ENCODE measurements at regions of chr1 and their contacts with region 1.

Region 1: DNA sequence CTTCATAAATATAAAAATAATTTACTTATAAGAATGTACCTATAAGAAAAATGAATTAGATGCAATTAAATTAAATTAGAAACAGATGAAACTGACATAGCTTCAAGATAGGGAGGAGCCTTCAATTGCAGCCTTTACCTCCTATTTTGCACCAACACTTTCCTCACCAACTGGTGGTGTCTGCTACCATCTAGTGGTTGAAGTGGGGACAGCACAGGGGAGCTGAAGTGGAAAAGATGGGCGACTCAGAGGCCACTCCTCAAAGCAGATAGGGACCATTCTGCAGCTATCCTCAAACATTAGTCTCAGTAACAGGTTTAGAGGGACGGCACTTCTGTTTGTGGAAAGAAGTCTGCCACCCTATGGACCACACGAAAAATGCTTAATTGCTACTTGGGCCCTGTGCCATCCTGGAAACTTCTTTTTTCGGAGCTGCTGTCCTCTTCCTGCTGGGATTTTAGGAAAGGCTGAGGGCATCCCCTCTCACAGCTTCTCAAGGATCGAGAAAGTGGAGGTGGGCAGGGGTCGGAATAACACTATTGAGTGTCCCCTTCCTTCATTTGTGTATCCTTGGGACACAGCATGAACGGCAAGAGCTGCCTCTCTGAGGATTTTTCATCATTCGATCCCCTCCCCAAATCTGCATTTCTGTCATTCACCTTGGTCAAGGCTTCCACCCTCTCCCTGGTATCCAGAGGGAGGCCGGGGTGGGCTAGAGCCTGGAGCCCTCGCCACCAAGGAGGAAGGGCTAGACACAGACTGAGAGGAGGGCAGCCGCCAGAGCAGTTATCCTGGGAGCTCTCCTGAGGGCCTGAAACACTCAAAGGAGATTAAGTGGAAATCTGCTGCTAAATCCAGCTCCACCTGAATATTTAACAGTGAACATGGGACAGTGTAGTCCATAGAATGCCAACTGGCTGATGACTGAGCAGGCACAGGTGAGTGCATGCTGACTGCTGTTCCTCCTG is 9.6 kb downstream of the PROK1 start:
- DNase-seq: peak; percentile 96
- H3K4me3 Mint-ChIP-seq: no peak overlapping the region
- H3K27ac Mint-ChIP-seq: no peak overlapping the region
- H3K4me1 Mint-ChIP-seq: no peaks in the 10 kb centered on the region
- H3K27me3 Mint-ChIP-seq: no peaks in the 10 kb centered on the region

Region 2: GRCh38 chr1:110196917-110197765 is 263.4 kb before region 1 on chr1:
- intact Hi-C with region 1: loop called (anchors 1 kb)
- DNase-seq: peak; percentile 86
- H3K4me3 Mint-ChIP-seq: no peak overlapping the region
- H3K27ac Mint-ChIP-seq: no peak overlapping the region
- H3K4me1 Mint-ChIP-seq: no peaks in the 10 kb centered on the region
- H3K27me3 Mint-ChIP-seq: no peaks in the 10 kb centered on the region

Region 3: GRCh38 chr1:110203021-110203661 is 257.4 kb before region 1 on chr1:
- intact Hi-C with region 1: loop called (anchors 1 kb)
- DNase-seq: peak; percentile 94
- H3K4me3 Mint-ChIP-seq: no peak overlapping the region
- H3K27ac Mint-ChIP-seq: peak overlapping the region; percentile 90
- H3K4me1 Mint-ChIP-seq: peaks cover 13% of the 10 kb centered on the region
- H3K27me3 Mint-ChIP-seq: no peaks in the 10 kb centered on the region

Region 4: DNA sequence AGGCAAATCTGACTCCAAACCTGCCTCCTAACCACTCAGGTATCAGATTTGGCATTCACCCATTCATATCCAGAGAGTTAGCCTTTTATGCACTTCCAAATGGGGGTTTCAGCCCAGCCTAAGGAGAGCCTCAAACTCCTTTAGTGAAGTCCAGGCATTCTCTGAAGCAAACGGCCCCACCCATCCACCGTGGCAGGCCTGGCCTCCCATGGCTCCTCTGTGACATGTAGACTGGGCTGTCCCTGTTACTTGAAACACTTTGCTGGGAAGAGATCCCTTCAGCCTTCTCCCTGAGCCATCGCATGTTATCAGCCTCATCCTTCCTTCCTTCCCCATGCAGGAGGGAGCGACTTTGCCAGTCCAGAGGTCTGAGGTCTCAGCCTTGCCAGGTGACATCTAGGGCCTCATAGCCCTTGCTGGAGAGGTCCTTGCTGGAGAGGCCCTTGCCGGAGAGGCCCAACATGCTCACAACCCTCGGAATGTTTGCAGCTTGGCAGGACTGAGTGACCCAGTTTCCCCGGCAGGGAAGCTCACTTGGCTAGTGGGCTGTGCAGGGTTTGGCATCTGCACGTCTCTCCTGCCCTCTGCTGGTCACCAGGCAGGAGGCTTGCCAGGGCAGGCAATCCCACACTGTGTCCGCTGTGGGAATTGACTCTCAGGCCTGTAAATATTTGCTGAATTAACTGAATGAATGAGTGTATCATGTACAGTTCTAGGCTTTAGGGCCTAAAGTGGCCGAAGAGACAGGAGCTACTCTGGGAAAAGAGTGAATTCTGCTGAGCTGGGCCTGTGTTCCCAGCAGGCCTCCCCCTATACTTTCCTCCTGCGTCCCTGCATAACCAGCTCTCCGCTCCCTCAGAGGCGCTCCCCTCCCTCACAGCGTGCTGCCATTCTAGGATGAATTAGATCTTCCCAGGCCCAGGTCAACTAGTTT is 148.1 kb before region 1 on chr1:
- intact Hi-C with region 1: loop called (anchors 5 kb)
- DNase-seq: peak; percentile 91
- H3K4me3 Mint-ChIP-seq: no peak overlapping the region
- H3K27ac Mint-ChIP-seq: no peak overlapping the region
- H3K4me1 Mint-ChIP-seq: no peaks in the 10 kb centered on the region
- H3K27me3 Mint-ChIP-seq: no peaks in the 10 kb centered on the region

Region 5: DNA sequence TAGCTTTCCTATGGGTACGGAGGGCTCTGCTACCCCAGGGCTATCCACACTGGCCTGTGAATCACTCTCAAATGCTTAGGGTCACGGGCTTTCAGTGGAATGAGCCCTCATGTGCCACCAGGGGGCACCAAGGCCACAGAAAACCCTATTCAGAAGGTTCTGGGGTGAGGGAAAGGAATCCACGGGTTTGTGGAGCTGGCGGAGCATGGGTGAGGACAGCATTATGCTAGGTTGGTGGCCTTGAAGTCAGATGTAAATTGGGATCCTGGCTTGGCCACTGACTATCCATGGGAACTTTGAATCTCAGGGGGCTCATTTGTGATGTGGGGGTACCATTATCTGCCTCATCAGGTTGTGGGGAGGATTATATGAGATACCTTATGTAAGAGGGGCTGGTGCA is 48.0 kb before region 1 on chr1:
- intact Hi-C with region 1: loop called (anchors 1 kb)
- DNase-seq: peak; percentile 89
- H3K4me3 Mint-ChIP-seq: no peak overlapping the region
- H3K27ac Mint-ChIP-seq: no peak overlapping the region
- H3K4me1 Mint-ChIP-seq: peaks cover 12% of the 10 kb centered on the region
- H3K27me3 Mint-ChIP-seq: no peaks in the 10 kb centered on the region

Region 6: GRCh38 chr1:110433803-110434202 is 26.7 kb before region 1 on chr1:
- intact Hi-C with region 1: no loop called
- DNase-seq: no peak
- H3K4me3 Mint-ChIP-seq: no peak overlapping the region
- H3K27ac Mint-ChIP-seq: no peak overlapping the region
- H3K4me1 Mint-ChIP-seq: no peaks in the 10 kb centered on the region
- H3K27me3 Mint-ChIP-seq: peaks cover 17% of the 10 kb centered on the region

Region 7: DNA sequence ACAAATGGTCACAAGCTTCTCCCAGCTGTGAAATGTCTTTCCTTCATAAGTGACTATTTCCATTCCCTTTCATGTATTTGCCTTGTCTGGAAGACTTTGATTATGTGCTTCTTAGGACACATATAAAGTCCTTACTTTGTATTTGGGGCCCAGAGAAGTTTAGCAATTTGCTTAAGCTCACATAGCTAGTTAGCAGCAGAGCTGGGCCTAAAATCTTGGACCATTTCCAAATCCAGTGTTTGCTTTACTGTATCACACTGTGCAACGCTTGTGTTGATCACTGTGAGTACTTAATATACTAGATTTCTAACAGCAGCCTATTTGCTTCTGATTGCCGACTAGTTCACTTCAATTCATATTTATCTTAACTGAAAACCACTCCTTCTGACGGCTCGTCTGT is 216.4 kb after region 1 on chr1:
- intact Hi-C with region 1: no loop called
- DNase-seq: no peak
- H3K4me3 Mint-ChIP-seq: no peak overlapping the region
- H3K27ac Mint-ChIP-seq: no peak overlapping the region
- H3K4me1 Mint-ChIP-seq: peaks cover 37% of the 10 kb centered on the region
- H3K27me3 Mint-ChIP-seq: no peaks in the 10 kb centered on the region

Region 8: DNA sequence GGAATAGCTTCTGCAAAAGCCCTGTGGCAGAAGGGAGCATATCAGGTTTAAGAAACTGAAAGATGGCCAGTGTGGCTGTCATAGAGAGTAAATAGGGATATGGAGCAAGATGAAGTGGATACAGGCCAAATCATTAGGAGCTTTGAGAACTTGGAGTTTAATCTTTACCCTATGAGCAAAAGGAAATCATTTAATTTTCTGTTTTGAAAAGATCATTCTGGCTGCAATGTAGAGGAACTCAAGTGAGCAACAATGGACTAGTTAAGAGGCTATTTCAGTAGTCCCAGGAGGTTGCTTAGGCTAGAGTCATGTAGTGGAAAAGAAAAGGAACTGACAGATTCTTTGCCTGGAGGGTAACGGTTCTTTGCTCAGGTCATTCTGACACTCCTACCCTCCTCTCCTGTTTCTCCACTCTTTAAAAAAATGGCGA is 1206.3 kb after region 1 on chr1:
- intact Hi-C with region 1: no loop called
- DNase-seq: no peak
- H3K4me3 Mint-ChIP-seq: no peak overlapping the region
- H3K27ac Mint-ChIP-seq: no peak overlapping the region
- H3K4me1 Mint-ChIP-seq: peaks cover 57% of the 10 kb centered on the region
- H3K27me3 Mint-ChIP-seq: no peaks in the 10 kb centered on the region

Measured in activated CD4-positive, alpha-beta T cell treated with anti-CD3 and anti-CD28 coated beads, Interleukin-2, amount 10 ng/mL, durations not matched to agents 24 days and 14 days (primary cell).